WTC11 (cell line): ENCODE measurements at regions of chr12 and their contacts with region 1.

Region 1: GRCh38 chr12:48890657-48891418 is 25.2 kb upstream of the RND1 start:
- DNase-seq: peak; percentile 92
- ATAC-seq: peak; percentile 95
- H3K4me3 Mint-ChIP-seq: peak overlapping the region; percentile 70
- H3K27ac Mint-ChIP-seq: no peak overlapping the region
- H3K4me1 Mint-ChIP-seq: peaks cover 7% of the 10 kb centered on the region
- H3K27me3 Mint-ChIP-seq: peaks cover 28% of the 10 kb centered on the region
- CTCF ChIP-seq: peak; percentile 92

Region 2: GRCh38 chr12:48779869-48780268 is 111.0 kb before region 1 on chr12:
- CTCF ChIA-PET with region 1: no interaction called
- POLR2A ChIA-PET with region 1: no interaction called
- DNase-seq: no peak
- ATAC-seq: no peak
- H3K4me3 Mint-ChIP-seq: no peak overlapping the region
- H3K27ac Mint-ChIP-seq: no peak overlapping the region
- H3K4me1 Mint-ChIP-seq: peaks cover 15% of the 10 kb centered on the region
- H3K27me3 Mint-ChIP-seq: no peaks in the 10 kb centered on the region
- CTCF ChIP-seq: no peak

Region 3: GRCh38 chr12:48814262-48815125 is 76.3 kb before region 1 on chr12:
- CTCF ChIA-PET with region 1: interaction called, 29 read pairs
- POLR2A ChIA-PET with region 1: no interaction called
- DNase-seq: peak; percentile 81
- ATAC-seq: peak; percentile 25
- H3K4me3 Mint-ChIP-seq: peak overlapping the region; percentile 87
- H3K27ac Mint-ChIP-seq: no peak overlapping the region
- H3K4me1 Mint-ChIP-seq: peaks cover 45% of the 10 kb centered on the region
- H3K27me3 Mint-ChIP-seq: peaks cover 69% of the 10 kb centered on the region
- CTCF ChIP-seq: peak; percentile 92

Region 4: GRCh38 chr12:48865434-48866290 is 25.2 kb before region 1 on chr12 and contains the start of gene RND1:
- CTCF ChIA-PET with region 1: interaction called, 116 read pairs
- POLR2A ChIA-PET with region 1: interaction called, 13 read pairs
- DNase-seq: peak; percentile 92
- ATAC-seq: peak; percentile 96
- H3K4me3 Mint-ChIP-seq: peak within 1 kb of the TSS; percentile 91
- H3K27ac Mint-ChIP-seq: peak within 1 kb of the TSS; percentile 94
- H3K4me1 Mint-ChIP-seq: peaks cover 44% of the 10 kb centered on the region
- H3K27me3 Mint-ChIP-seq: peaks cover 6% of the 10 kb centered on the region; the same call in 1 of the 2 replicates
- CTCF ChIP-seq: no peak
- total RNA-seq, gene RND1: 7.6 to 9.1 TPM (median 8.5 TPM) in 3 replicates

Region 5: GRCh38 chr12:48903982-48904411 is 13.2 kb after region 1 on chr12:
- CTCF ChIA-PET with region 1: interaction called, 126 read pairs
- POLR2A ChIA-PET with region 1: no interaction called
- DNase-seq: peak; percentile 92
- ATAC-seq: peak; percentile 100
- H3K4me3 Mint-ChIP-seq: peak overlapping the region; percentile 65
- H3K27ac Mint-ChIP-seq: no peak overlapping the region
- H3K4me1 Mint-ChIP-seq: 0 out of 2 replicates have a peak, but pooled peaks cover 3% of the 10 kb centered on the region
- H3K27me3 Mint-ChIP-seq: peaks cover 14% of the 10 kb centered on the region
- CTCF ChIP-seq: peak; percentile 45; the same call in 1 of the 2 replicates

Region 6: DNA sequence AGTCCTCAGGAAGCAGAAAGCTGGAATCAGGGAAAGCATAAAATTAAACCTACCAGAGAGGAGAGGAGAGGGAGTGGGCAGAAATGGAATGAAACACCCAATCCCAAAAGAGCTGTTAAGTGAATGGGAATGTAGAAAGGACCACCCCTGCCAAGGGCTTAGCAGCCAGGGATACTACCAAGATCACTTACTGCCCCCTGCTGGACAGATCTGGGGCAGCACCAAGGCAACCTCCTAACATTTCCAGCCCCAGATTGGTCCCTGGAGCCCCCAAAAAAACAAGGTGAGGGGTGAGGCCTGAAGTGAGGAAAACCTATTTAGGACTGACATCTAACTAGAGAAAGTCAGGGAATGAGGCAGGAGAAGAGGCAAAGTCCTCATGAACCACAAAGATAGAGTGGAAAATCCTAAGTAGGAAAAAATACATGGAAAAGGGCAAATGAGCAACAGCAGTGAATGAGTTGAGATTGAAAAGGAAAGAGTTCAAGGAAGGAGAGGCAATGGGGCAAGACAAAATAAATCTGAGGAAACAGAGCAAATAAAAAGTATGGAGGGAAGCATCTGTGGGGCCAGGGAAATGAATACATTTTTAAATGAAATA is 45.6 kb after region 1 on chr12:
- CTCF ChIA-PET with region 1: interaction called, 33 read pairs
- POLR2A ChIA-PET with region 1: no interaction called
- DNase-seq: peak; percentile 89
- ATAC-seq: peak; percentile 88
- H3K4me3 Mint-ChIP-seq: no peak overlapping the region
- H3K27ac Mint-ChIP-seq: peak overlapping the region; percentile 46
- H3K4me1 Mint-ChIP-seq: no peaks in the 10 kb centered on the region
- H3K27me3 Mint-ChIP-seq: no peaks in the 10 kb centered on the region
- CTCF ChIP-seq: peak; percentile 70

Region 7: DNA sequence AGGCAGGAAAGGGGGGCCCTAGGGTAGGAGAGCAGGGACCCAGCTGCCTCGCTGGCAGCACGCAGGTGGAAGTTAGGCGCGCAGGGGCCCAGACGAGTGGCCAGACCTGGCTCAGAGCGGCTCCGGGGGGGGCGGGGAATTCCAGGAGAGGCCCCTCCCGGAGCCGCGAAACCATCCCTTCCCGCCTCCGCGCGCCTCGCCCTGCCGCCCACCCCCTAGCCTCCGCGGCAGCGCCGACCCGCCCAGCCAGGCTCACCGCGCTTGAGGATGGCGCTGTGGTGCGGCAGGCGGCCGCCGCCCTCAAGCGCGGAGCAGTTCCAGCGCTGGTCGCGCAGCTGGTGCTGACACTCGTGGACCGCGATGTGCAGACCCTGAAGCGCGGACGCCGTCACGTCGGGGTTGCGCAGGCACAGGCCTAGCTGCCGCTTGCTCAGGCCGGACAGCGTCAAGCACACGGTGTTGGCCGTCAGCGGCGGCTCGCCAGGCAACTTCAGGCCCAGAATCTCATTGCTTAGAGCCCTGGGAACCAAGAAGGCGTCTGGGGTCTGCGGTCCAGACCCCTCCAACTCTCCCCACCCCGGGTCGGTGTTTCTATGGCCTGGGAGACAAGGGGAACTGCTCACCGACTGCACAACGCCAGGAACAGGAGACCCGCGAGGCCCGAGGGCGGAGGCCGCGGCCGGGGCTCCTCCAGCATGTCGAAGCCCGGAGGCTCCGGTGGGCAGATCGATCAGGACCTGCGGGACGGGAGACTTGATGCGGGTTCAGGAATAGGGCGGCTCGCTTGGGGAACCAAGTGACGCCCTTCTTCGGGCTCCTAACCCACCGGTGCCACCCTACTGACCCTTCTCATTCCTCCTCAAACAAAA is 79.2 kb after region 1 on chr12:
- CTCF ChIA-PET with region 1: interaction called, 12 read pairs
- POLR2A ChIA-PET with region 1: no interaction called
- DNase-seq: peak; percentile 48
- ATAC-seq: peak; percentile 3; the same call in 1 of the 2 replicates
- H3K4me3 Mint-ChIP-seq: peak overlapping the region; percentile 86
- H3K27ac Mint-ChIP-seq: no peak overlapping the region
- H3K4me1 Mint-ChIP-seq: peaks cover 54% of the 10 kb centered on the region
- H3K27me3 Mint-ChIP-seq: peaks cover 89% of the 10 kb centered on the region
- CTCF ChIP-seq: no peak

Region 8: DNA sequence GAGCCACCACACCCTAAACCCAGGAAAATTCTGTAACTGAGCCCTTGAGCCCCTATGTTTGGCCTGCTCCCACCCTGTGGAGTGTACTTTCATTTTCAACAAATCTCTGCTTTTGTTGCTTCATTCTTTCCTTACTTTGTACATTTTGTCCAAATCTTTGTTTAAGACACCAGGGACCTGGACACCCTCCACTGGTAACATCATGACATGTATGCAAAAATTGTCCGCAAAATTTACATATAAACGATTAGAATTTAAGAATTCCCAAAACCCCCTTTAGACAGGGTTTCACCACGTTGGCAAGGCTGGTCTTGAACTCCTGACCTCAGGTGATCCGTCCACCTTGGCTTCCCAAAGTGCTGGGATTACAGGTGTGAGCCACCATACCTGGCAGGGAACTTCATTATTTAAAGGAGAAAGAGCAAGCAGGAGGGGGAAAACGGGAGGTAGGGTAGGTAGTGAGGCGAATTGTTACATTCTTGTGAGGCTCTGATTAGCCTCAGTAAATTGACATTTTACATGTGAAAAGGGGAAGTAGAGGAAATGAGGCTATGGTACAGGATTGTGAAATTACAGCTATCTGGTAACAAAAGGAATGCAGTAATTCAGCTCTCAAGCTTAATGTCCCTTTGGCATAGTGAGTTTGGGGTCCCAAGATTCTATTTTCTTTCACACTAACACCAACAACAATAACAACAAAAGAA is 270.4 kb after region 1 on chr12:
- CTCF ChIA-PET with region 1: no interaction called
- POLR2A ChIA-PET with region 1: no interaction called
- DNase-seq: no peak
- ATAC-seq: no peak
- H3K4me3 Mint-ChIP-seq: no peak overlapping the region
- H3K27ac Mint-ChIP-seq: no peak overlapping the region
- H3K4me1 Mint-ChIP-seq: 0 out of 2 replicates have a peak, but pooled peaks cover 7% of the 10 kb centered on the region
- H3K27me3 Mint-ChIP-seq: no peaks in the 10 kb centered on the region
- CTCF ChIP-seq: no peak